AG04450 (cell line): ENCODE measurements at regions of chr13 and their contacts with region 1.

Region 1: DNA sequence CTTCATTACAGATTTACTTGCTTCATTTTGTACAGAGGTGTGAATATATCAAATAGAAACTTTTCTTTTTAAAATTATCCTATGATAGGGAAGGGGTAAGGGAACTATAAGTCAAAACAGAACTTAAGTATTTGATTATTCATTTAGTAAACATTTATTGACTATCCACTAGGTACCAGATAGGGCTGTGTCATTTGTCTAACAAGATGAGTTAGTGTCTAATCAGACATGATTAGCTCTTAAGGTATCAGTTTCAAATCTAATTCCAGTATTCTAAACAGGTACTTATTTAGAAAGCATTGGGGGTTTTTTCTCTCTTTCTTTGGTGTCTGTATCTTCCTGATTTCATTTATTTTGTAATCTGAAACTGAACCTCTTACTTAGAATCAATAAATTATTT is 32.2 kb downstream of the CDADC1 start:
- DNase-seq: no peak
- H3K4me3 ChIP-seq: no peak overlapping the region
- H3K27ac ChIP-seq: no peak overlapping the region
- H3K27me3 ChIP-seq: no peaks in the 10 kb centered on the region
- CTCF ChIP-seq: no peak

Region 2: GRCh38 chr13:49240017-49240416 is 39.9 kb before region 1 on chr13:
- CTCF ChIA-PET with region 1: interaction called, 26 read pairs
- POLR2A ChIA-PET with region 1: no interaction called
- DNase-seq: no peak
- H3K4me3 ChIP-seq: no peak overlapping the region
- H3K27ac ChIP-seq: no peak overlapping the region
- H3K27me3 ChIP-seq: no peaks in the 10 kb centered on the region
- CTCF ChIP-seq: peak; percentile 62

Region 3: DNA sequence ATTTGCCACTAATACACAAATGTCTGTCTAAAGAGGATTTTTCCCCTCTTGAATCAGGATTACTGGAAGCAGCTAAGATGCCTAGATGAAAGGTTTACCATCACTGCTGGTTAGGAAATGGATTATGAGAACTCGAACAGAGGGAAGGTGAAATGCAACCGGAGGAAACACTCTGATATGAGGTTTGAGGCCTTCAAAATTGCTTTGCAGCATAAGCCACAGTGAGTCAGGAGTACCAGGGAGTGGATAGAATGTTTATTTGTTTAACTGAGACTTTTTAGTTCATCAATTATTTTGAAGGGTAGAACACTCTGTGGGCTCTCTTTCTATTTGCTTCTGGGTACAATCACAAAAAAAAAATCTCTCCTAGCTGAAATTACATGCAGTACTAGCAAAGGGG is 14.1 kb before region 1 on chr13:
- CTCF ChIA-PET with region 1: interaction called, 25 read pairs
- POLR2A ChIA-PET with region 1: no interaction called
- DNase-seq: peak; percentile 10
- H3K4me3 ChIP-seq: no peak overlapping the region
- H3K27ac ChIP-seq: no peak overlapping the region
- H3K27me3 ChIP-seq: no peaks in the 10 kb centered on the region
- CTCF ChIP-seq: no peak

Region 4: DNA sequence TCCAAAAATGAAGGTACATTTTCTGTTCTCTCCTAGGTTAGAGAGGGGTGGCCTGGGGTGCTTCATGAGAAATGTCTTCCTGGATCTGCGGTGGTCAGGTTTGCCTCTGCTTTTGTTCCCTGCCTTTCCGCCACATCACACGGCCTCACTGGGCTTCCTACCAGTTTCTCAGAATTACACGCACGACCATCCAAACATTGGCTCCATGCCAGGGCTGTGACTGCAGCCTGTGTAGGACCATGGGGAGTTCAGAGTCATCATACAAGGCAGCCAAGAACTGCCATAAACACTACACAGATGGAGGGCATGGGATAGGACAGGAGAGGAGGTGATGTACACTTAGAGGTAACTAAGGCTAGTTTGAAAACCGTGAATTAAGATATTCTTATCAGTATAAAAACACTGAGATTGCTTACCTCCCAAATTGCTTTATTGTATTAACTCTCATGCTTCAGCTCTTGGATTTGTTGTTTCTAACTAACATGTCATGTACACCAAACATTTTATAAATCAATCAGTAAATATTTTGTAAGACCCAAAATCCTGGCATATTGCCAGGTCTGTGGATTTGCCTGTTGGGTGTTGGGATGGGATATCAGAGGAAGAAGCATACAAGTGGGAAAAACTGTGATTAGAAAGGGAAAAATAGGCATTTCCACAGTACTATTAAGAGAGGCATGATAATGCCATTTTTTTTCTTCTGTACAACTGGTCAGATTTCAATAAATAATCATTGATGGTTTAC is 13.0 kb after region 1 on chr13:
- CTCF ChIA-PET with region 1: interaction called, 34 read pairs
- POLR2A ChIA-PET with region 1: no interaction called
- DNase-seq: peak; percentile 77
- H3K4me3 ChIP-seq: no peak overlapping the region
- H3K27ac ChIP-seq: no peak overlapping the region
- H3K27me3 ChIP-seq: no peaks in the 10 kb centered on the region
- CTCF ChIP-seq: no peak

Region 5: DNA sequence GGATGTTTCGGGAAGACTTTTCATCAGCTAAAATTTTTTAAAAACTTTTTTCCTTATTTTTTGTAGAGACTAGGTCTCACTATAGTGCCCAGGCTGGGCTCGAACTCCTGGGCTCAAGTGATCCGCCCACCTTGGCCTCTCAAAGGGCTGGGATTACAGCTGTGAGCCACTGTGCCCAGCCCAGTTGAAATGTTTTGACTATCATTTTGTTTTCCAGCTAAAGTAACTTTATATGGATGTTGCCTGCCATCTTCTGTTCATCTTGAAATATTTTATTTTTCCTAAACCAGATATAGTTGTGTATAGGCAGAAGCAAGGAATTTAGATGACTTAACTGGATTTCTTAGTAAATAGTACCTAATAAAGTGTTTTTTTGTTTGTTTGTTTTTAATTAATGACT is 157.0 kb after region 1 on chr13:
- CTCF ChIA-PET with region 1: interaction called, 18 read pairs
- POLR2A ChIA-PET with region 1: no interaction called
- DNase-seq: no peak
- H3K4me3 ChIP-seq: no peak overlapping the region
- H3K27ac ChIP-seq: no peak overlapping the region
- H3K27me3 ChIP-seq: no peaks in the 10 kb centered on the region
- CTCF ChIP-seq: peak; percentile 30